ENCODE measurements at regions of chr20 and their contacts with region 1.

Region 1: GRCh38 chr20:33540427-33540826 is 50.5 kb downstream of the CBFA2T2 start:
- DNase-seq: no peak
- ATAC-seq: no peak
- H3K4me3 ChIP-seq: no peak overlapping the region
- H3K4me3 Mint-ChIP-seq: no peak overlapping the region
- H3K27ac ChIP-seq: no peak overlapping the region
- H3K27ac Mint-ChIP-seq: no peak overlapping the region
- H3K4me1 ChIP-seq: no peaks in the 10 kb centered on the region
- H3K4me1 Mint-ChIP-seq: peaks cover 32% of the 10 kb centered on the region
- H3K27me3 ChIP-seq: no peaks in the 10 kb centered on the region
- H3K27me3 Mint-ChIP-seq: no peaks in the 10 kb centered on the region
- CTCF ChIP-seq: no peak

Region 2: DNA sequence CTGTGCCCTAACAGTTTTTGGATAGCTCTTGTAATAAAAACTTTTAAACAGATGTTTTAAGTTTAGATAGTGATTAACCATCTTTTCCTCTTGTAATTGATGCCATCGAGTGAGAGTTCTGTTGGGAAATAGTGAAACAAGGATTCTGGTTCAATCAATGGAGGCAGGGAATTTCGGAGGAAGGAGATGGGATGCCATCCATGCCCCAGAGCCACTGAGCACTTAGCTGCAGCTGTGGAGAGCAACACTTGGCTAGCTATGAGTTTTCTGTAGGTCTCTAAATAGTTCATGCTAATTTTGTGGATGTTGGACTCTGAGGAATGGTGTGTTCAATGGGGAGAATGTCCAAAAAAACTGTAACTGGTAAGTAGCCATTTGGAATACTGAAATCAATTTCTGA is 33.9 kb before region 1 on chr20:
- CTCF ChIA-PET with region 1: no interaction called
- POLR2A ChIA-PET with region 1: no interaction called
- intact Hi-C with region 1: loop called in 1 of 2 experiments (anchors 5 kb)
- DNase-seq: no peak
- ATAC-seq: no peak
- H3K4me3 ChIP-seq: no peak overlapping the region
- H3K4me3 Mint-ChIP-seq: no peak overlapping the region
- H3K27ac ChIP-seq: no peak overlapping the region
- H3K27ac Mint-ChIP-seq: no peak overlapping the region
- H3K4me1 ChIP-seq: no peaks in the 10 kb centered on the region
- H3K4me1 Mint-ChIP-seq: peaks cover 38% of the 10 kb centered on the region
- H3K27me3 ChIP-seq: no peaks in the 10 kb centered on the region
- H3K27me3 Mint-ChIP-seq: no peaks in the 10 kb centered on the region
- CTCF ChIP-seq: no peak

Region 3: GRCh38 chr20:33611106-33611505 is 70.7 kb after region 1 on chr20:
- CTCF ChIA-PET with region 1: no interaction called
- POLR2A ChIA-PET with region 1: no interaction called
- intact Hi-C with region 1: no loop called
- DNase-seq: no peak
- ATAC-seq: no peak
- H3K4me3 ChIP-seq: no peak overlapping the region
- H3K4me3 Mint-ChIP-seq: no peak overlapping the region
- H3K27ac ChIP-seq: no peak overlapping the region
- H3K27ac Mint-ChIP-seq: no peak overlapping the region
- H3K4me1 ChIP-seq: no peaks in the 10 kb centered on the region
- H3K4me1 Mint-ChIP-seq: no peaks in the 10 kb centered on the region
- H3K27me3 ChIP-seq: no peaks in the 10 kb centered on the region
- H3K27me3 Mint-ChIP-seq: no peaks in the 10 kb centered on the region
- CTCF ChIP-seq: no peak

Measured in CD4-positive, alpha-beta T cell (primary cell).